ENCODE measurements at regions of chrX and their contacts with region 1.

Region 1: DNA sequence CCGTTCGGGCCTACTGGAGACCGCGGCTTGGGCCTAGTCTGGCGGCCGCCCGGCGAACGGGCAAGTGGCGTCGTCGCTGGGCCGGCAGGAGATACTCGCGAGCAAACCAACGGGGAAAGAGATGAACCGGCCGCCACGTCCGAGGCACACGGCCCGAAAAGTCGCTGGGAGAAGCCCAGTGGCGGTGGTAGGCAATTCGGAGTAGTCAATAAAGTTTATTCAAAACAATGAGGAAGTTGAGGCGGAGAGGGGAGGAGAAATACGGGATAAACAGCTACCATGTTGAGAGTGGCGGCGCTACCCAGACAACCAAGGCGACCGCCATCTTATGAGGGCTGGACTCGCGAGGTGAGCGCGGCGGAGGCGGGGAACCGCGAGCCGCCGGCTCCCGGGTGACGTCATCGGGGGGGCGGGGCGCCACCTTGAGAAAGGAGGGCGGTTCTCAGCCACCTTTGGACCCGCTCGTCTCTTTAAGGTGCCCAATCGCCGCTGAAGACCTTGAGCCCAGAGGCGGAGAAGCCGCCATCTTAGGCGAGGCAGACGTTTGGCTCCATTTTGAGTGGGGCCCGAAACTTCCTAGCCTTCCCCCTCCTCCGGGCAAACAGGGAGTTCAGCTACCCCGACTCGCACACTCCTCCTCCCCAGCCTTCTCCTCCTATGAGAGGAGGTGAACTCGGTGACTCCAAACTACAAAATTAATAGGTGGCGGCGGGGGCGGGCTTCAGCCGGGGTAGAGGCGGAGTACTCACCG is at the start of gene PHF8:
- DNase-seq: peak; percentile 76 to 97
- ATAC-seq: peak; percentile 90 to 94
- H3K4me3 ChIP-seq: peak within 1 kb of the TSS; percentile 77
- H3K27ac ChIP-seq: peak within 1 kb of the TSS; percentile 96 to 99
- H3K4me1 ChIP-seq: peaks cover 16% of the 10 kb centered on the region
- CTCF ChIP-seq: no peak
- EP300 ChIP-seq: no peak
- POLR2A ChIP-seq: peak; percentile 42
- RAD21 ChIP-seq: no peak
- polyA plus RNA-seq, gene PHF8: 11.7 and 18.6 TPM in 2 replicates

Region 2: DNA sequence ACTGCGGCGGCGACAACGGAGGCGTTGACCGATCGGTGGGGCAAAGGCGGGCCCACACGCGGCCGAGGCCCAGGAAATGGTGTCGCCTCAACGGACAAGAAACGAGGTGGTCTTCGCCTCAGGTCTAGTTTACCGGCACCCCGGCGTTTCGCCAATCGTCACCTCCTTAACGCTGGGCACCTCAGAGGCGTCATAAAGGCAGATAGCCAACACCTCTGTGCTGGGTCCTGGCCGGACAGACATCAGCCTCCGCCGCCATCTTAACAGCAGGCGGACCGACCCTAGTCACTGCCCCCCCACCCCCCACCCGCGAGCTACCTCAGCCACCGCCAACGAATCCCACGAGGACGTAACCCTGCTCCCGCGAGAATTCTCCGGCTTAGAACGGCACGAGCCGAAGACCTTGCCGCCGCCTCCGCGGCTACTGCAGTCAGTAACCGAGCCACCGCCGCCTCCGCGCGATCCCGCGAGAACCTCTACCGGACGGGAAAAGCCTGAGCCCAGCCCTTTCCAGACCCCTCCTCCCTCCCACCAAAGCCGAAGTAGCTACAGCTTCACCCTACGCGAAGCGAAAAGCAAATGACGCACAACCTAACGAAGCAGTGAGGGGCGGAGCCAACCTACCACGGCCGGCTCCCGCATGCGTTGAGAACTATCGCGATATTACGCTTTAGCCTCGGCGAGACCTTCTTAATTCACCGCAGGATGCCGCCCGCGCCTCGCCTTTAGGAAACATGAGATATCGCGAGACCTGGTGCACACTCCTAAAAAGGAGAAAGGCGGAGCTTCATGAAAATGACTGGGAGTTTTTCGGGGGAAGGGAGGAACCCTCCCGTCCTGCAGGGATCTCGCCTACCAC is 360.5 kb before region 1 on chrX:
- CTCF ChIA-PET with region 1: interaction called, 4 read pairs
- POLR2A ChIA-PET with region 1: interaction called, 16 read pairs
- DNase-seq: peak; percentile 75 to 99
- ATAC-seq: peak; percentile 69 to 79
- H3K4me3 ChIP-seq: peak overlapping the region; percentile 90
- H3K27ac ChIP-seq: peak overlapping the region; percentile 98
- H3K4me1 ChIP-seq: peaks cover 20% of the 10 kb centered on the region; the same call in 2 of the 3 replicates
- CTCF ChIP-seq: no peak
- EP300 ChIP-seq: no peak
- POLR2A ChIP-seq: peak; percentile 60
- RAD21 ChIP-seq: no peak

Region 3: GRCh38 chrX:53939127-53939526 is 105.2 kb before region 1 on chrX:
- CTCF ChIA-PET with region 1: no interaction called
- POLR2A ChIA-PET with region 1: no interaction called
- DNase-seq: no peak
- ATAC-seq: no peak
- H3K4me3 ChIP-seq: no peak overlapping the region
- H3K27ac ChIP-seq: no peak overlapping the region
- H3K4me1 ChIP-seq: no peaks in the 10 kb centered on the region
- CTCF ChIP-seq: no peak
- EP300 ChIP-seq: no peak
- POLR2A ChIP-seq: no peak
- RAD21 ChIP-seq: no peak

Region 4: DNA sequence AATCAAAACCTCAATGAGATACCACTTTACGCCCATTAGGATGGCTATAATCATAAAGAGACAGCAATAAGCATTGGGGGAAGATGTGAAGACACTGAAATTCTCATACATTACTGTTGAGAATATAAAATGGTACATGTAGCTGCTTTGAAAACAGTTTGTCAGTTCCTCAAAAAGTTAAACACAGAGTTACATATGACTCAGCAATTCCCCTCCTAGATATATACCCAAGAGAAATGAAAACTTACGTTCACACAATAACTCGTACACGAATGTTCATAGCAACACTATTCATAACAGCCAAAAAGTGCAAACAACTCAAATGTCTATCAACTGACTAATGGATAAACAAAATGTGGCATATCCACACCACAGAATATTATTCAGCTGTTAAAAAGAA is 36.6 kb before region 1 on chrX:
- CTCF ChIA-PET with region 1: no interaction called
- POLR2A ChIA-PET with region 1: no interaction called
- DNase-seq: no peak
- ATAC-seq: no peak
- H3K4me3 ChIP-seq: no peak overlapping the region
- H3K27ac ChIP-seq: no peak overlapping the region
- H3K4me1 ChIP-seq: no peaks in the 10 kb centered on the region
- CTCF ChIP-seq: no peak
- EP300 ChIP-seq: no peak
- POLR2A ChIP-seq: no peak
- RAD21 ChIP-seq: no peak

Region 5: DNA sequence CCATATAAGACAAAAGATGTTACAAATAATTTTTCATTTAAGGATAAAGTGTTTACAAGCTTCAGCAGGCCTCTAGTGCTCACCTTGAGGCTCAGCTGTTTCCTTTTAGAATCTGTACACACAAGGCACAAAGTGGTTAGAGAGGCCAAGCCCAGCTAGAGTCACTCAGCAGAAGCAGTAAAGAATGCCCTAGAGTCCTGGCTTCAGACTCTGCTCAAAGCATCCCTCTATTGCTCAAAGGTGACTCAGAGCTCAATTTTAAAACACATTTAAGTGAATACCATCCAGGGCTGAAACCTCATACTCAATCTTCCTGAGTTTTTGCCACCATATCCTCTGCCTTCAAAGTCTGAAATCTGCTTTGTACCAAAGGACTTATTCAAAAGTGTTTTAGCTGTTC is 22.5 kb after region 1 on chrX:
- CTCF ChIA-PET with region 1: no interaction called
- POLR2A ChIA-PET with region 1: no interaction called
- DNase-seq: no peak
- ATAC-seq: no peak; a peak in 1 of 6 replicates
- H3K4me3 ChIP-seq: no peak overlapping the region
- H3K27ac ChIP-seq: no peak overlapping the region
- H3K4me1 ChIP-seq: no peaks in the 10 kb centered on the region
- CTCF ChIP-seq: no peak
- EP300 ChIP-seq: no peak
- POLR2A ChIP-seq: no peak
- RAD21 ChIP-seq: no peak